ENCODE measurements at regions of chr6 and their contacts with region 1.

Region 1: DNA sequence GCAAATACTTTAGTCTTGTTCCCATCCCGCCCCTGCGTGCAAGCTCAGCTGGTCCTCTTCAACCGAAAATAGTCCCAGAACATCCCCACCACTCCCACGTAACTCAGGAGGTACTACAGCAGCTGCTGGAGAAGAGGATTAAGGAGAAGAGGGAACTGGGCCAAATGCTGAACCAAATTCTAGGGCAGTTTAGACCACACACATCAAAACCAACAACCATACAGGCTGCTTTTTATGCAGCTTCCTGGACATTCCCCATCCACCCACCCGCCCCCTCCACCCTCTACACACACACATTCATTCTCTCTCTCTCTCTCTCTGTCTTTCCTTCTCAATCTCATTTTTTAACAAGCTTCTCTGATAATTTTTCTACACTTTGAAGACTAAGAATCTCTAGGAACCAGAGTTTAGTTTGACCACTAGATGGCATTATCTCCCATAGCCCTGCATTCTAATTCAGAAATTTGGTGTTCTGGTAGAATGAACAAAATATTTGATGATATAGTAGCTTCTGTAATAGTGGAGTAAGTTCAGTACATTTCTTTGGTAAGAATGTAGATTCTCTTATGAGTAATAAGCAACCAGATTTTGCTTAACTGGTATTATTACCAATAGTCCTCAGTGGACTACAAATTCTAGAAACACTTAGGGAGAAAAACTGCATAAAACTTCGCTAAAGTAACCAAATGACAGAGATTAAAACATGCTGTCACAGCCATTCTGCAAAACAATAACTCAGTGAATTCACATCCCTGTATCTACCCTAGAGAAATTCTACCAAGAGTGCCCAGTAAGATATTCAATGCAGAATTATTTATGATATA is 52.1 kb upstream of the BEND6 start:
- DNase-seq: no peak
- H3K4me3 Mint-ChIP-seq: no peak overlapping the region
- H3K27ac Mint-ChIP-seq: no peak overlapping the region
- H3K4me1 Mint-ChIP-seq: no peaks in the 10 kb centered on the region
- H3K27me3 Mint-ChIP-seq: peaks cover 20% of the 10 kb centered on the region

Region 2: GRCh38 chr6:56890683-56891429 is 12.0 kb before region 1 on chr6:
- CTCF ChIA-PET with region 1: interaction called, 14 read pairs
- POLR2A ChIA-PET with region 1: interaction called, 4 read pairs
- DNase-seq: no peak
- H3K4me3 Mint-ChIP-seq: no peak overlapping the region
- H3K27ac Mint-ChIP-seq: peak overlapping the region; percentile 59
- H3K4me1 Mint-ChIP-seq: peaks cover 32% of the 10 kb centered on the region
- H3K27me3 Mint-ChIP-seq: peaks cover 4% of the 10 kb centered on the region

Region 3: DNA sequence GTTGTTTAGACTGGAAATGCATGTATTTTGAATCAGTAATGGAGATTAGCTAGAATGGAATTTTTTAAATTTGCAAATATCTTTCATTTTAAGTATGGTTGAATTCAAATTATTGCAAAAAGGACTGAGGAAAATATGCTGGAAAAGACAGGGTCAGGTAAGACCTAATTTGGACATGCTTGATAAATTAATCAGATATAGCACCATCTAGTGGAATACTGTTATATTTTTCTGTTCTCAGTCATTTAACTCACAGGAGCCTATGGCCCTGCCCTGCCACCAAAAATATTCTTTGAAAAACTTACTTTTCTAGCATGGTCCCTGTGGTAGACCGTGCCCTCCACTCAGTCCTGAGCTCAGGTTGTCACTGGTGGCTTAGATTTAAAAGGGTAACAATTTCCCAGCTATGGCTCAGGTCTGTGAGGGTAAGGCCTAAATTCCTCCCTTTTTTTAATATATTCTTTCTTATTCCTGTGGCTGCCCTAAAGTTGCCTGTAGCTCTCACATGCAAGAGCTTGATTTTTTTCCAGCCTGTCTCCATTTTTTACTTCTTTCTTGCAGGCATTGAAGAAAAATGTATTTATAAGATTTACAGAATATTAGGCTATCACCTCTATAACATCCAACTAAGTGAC is 118.3 kb after region 1 on chr6:
- CTCF ChIA-PET with region 1: interaction called, 36 read pairs
- POLR2A ChIA-PET with region 1: no interaction called
- DNase-seq: no peak
- H3K4me3 Mint-ChIP-seq: no peak overlapping the region
- H3K27ac Mint-ChIP-seq: no peak overlapping the region
- H3K4me1 Mint-ChIP-seq: no peaks in the 10 kb centered on the region
- H3K27me3 Mint-ChIP-seq: peaks cover 30% of the 10 kb centered on the region

Region 4: DNA sequence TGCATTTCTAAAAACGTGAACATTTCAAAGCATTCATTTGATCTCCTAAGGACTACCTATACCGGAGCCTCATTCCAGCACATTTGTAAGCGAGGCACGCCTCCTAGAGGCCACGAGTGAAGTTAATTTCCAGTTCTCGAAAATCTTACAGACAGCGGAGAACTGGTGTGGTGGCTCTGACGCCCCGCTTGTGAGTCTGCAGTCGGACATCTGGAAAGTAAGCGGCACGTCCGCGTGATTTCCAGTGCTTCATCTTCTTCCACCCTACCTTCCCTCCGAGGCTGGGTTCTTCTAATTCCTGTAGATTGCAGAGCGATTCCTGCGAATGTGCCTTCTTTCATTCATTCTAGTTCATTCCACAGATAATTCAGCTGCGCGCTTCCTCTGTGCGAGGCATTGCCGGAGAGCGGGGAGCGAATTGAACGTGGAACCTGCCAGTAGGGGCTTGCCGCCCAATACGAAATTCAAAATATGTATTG is 413.8 kb after region 1 on chr6:
- CTCF ChIA-PET with region 1: interaction called, 134 read pairs
- POLR2A ChIA-PET with region 1: interaction called, 9 read pairs
- DNase-seq: peak; percentile 86
- H3K4me3 Mint-ChIP-seq: peak overlapping the region; percentile 97
- H3K27ac Mint-ChIP-seq: peak overlapping the region; percentile 91
- H3K4me1 Mint-ChIP-seq: peaks cover 40% of the 10 kb centered on the region
- H3K27me3 Mint-ChIP-seq: peaks cover 3% of the 10 kb centered on the region

Measured in activated CD4-positive, alpha-beta memory T cell treated with anti-CD3 and anti-CD28 coated beads, Interleukin-2, amount 10 ng/mL, durations not matched to agents 7 days and 5 days (primary cell).